ENCODE measurements at regions of chr3 and their contacts with region 1.

Region 1: DNA sequence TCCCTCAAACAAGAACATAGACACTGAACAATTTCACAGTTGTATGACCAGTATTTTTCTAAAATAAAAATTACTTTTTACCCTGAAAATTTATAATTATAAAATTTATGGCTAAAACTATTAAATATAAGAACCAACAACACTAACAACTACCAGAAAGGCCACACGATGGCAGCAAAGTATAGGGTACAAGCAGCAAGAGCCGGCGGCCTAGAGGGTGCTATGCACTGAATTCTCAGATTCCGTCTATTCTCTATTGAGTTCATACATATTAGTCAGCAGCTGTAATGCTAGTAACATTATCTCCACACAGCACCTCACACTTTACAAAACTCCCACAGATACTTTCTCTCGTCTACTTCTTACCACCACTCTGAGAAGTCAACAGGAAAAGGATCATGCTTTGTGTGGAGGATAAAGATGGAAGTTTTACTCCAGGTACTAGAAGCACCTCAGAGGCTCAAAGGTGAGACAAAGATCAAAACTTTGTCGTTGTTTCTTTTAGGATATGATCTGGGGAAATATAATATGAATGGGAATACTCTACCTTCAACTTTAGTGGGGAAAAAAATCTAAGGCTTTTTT is 160.5 kb downstream of the FGF12 start:
- DNase-seq: peak; percentile 82
- H3K4me3 Mint-ChIP-seq: no peak overlapping the region
- H3K27ac Mint-ChIP-seq: no peak overlapping the region
- H3K4me1 Mint-ChIP-seq: no peaks in the 10 kb centered on the region
- H3K27me3 Mint-ChIP-seq: no peaks in the 10 kb centered on the region
- CTCF ChIP-seq: peak; percentile 93

Region 2: GRCh38 chr3:192395506-192395905 is 171.3 kb before region 1 on chr3:
- CTCF ChIA-PET with region 1: no interaction called
- intact Hi-C with region 1: no loop called
- DNase-seq: no peak
- H3K4me3 Mint-ChIP-seq: no peak overlapping the region
- H3K27ac Mint-ChIP-seq: no peak overlapping the region
- H3K4me1 Mint-ChIP-seq: no peaks in the 10 kb centered on the region
- H3K27me3 Mint-ChIP-seq: no peaks in the 10 kb centered on the region
- CTCF ChIP-seq: no peak

Region 3: DNA sequence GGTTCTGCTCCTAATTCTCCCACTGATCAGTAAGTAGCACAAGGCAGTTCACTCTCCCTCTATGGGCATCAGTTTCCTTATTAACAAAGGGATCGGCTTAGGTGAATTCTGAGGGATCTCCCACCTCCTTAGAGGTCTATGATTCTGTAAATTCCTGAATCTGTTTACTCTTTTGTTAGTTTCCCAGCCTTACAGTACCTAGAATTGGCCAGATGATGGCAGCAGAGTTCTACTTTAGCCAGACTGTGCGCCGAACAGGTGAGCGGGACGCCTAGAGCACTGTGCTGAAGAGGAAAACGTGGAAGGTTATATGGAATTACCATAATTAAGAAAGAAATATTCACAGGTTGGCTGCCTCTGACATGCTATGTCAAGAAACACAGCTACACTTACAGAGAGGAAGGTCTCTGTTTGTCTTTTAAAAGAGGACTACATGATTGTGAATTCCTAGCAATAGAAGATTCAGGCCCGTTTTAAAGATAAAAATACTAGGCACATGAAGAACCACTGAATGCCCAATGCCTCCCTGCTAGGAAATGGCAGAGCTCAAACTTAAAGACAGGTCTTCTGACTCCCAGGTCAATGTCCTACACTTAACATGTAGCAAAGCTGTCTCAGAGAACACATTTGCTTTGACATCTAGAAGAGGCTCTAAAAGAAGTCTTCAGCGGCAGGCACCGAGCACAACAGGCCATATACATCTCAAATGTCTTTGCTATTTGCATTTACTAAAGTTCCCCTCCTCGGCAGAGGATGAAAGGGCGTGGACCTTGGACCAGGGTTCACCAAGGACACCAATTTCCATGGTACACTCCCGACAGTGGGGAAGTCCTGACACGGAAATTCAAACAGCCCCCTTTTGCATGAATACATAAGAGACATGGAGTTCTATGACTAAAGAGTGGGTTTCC is 99.3 kb before region 1 on chr3:
- CTCF ChIA-PET with region 1: no interaction called
- intact Hi-C with region 1: loop called (anchors 1 kb)
- DNase-seq: peak; percentile 81
- H3K4me3 Mint-ChIP-seq: no peak overlapping the region
- H3K27ac Mint-ChIP-seq: no peak overlapping the region
- H3K4me1 Mint-ChIP-seq: no peaks in the 10 kb centered on the region
- H3K27me3 Mint-ChIP-seq: peaks cover 32% of the 10 kb centered on the region
- CTCF ChIP-seq: peak; percentile 96

Region 4: DNA sequence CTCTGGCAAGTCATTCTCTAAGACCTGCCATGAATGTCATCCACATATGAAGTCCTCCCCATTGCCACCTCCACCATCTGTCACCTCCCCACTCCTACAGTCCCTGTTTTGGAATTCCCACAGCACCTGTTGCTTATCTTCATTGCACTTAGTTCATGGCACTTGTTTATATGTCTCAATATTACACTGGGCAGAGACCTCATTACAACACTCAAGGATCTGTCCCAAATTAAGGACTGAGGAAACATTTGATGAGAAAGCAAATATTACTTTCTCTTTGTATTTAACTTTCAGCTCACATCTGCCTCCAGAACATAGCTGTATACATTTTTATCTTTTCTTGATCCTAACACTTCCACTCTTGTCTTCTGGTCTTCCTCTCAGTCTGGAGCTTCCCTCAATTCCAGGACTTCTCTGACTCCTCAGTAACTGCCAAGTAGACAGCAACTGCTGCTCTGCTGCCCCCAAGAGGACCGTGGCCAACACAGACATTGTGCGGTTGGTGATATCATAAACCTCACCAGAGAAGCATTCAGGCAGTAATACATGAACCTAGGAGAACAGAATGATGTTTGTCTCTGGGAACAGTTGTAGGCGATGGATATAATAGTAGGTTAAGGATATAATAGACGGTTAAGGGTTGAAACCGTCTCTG is 205.6 kb after region 1 on chr3:
- CTCF ChIA-PET with region 1: interaction called, 3 read pairs
- intact Hi-C with region 1: loop called (anchors 1 kb)
- DNase-seq: peak; percentile 71
- H3K4me3 Mint-ChIP-seq: no peak overlapping the region
- H3K27ac Mint-ChIP-seq: no peak overlapping the region
- H3K4me1 Mint-ChIP-seq: no peaks in the 10 kb centered on the region
- H3K27me3 Mint-ChIP-seq: peaks cover 35% of the 10 kb centered on the region
- CTCF ChIP-seq: peak; percentile 47

Region 5: GRCh38 chr3:192802957-192803899 is 236.4 kb after region 1 on chr3:
- CTCF ChIA-PET with region 1: interaction called, 8 read pairs
- intact Hi-C with region 1: loop called (anchors 1 kb)
- DNase-seq: no peak
- H3K4me3 Mint-ChIP-seq: no peak overlapping the region
- H3K27ac Mint-ChIP-seq: no peak overlapping the region
- H3K4me1 Mint-ChIP-seq: no peaks in the 10 kb centered on the region
- H3K27me3 Mint-ChIP-seq: no peaks in the 10 kb centered on the region
- CTCF ChIP-seq: peak; percentile 60

Region 6: DNA sequence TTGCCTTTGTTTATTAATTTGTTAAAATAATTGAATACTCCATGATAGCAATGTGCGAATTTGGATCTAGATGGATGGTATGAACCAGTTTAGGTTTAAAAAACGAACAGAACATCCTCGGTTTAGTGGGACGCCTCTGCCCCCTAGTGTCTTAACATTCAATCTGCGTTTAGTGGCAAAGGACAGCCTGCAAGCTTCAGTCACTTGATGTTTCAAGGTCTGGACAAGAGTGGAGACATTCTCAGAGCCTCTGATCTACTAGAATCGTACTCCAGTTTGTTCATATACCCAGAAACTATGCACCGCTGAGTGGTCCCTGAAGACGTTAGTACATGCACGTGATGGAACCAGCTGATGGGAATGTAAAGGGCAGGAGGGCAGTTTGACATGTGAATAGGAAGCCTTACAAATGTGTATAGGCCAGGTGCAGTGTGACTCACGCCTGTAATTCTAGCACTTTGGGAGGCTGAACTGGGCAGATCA is 1005.7 kb after region 1 on chr3:
- CTCF ChIA-PET with region 1: no interaction called
- intact Hi-C with region 1: loop called (anchors 10 kb)
- DNase-seq: peak; percentile 83
- H3K4me3 Mint-ChIP-seq: no peak overlapping the region
- H3K27ac Mint-ChIP-seq: no peak overlapping the region
- H3K4me1 Mint-ChIP-seq: peaks cover 13% of the 10 kb centered on the region
- H3K27me3 Mint-ChIP-seq: no peaks in the 10 kb centered on the region
- CTCF ChIP-seq: peak; percentile 82

Measured in Calu3 (cell line).